MCF 10A (cell line): ENCODE measurements at regions of chr9 and their contacts with region 1.

Region 1: GRCh38 chr9:29613773-29614172 is 2040.5 kb upstream of the C9orf72 start:
- DNase-seq: no peak
- H3K4me3 Mint-ChIP-seq: no peak overlapping the region
- H3K27ac Mint-ChIP-seq: no peak overlapping the region
- H3K4me1 Mint-ChIP-seq: no peaks in the 10 kb centered on the region
- H3K27me3 Mint-ChIP-seq: no peaks in the 10 kb centered on the region
- CTCF ChIP-seq: no peak

Region 2: DNA sequence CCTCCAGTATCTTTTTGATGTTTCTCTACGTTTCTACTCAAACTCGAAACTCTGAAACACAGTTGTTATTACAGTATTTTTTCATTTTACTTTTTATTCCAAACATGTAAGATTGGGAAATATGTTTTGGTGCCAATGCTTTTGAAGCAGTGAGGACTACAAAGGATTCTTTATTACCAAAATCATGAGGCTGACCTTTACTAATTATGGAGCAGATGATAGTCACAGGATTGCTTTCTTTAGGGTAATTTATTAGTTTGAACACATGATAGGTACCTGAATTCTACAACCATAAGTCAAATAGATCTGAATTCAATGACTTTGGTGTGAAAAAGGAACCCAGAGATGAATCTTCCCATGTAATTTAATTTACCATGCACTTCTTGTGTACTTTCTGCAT is 25.4 kb before region 1 on chr9:
- CTCF ChIA-PET with region 1: no interaction called
- POLR2A ChIA-PET with region 1: no interaction called
- intact Hi-C with region 1: no loop called
- DNase-seq: no peak
- H3K4me3 Mint-ChIP-seq: no peak overlapping the region
- H3K27ac Mint-ChIP-seq: no peak overlapping the region
- H3K4me1 Mint-ChIP-seq: no peaks in the 10 kb centered on the region
- H3K27me3 Mint-ChIP-seq: no peaks in the 10 kb centered on the region
- CTCF ChIP-seq: no peak

Region 3: GRCh38 chr9:29730163-29730562 is 116.4 kb after region 1 on chr9:
- CTCF ChIA-PET with region 1: no interaction called
- POLR2A ChIA-PET with region 1: no interaction called
- intact Hi-C with region 1: no loop called
- DNase-seq: no peak
- H3K4me3 Mint-ChIP-seq: no peak overlapping the region
- H3K27ac Mint-ChIP-seq: no peak overlapping the region
- H3K4me1 Mint-ChIP-seq: no peaks in the 10 kb centered on the region
- H3K27me3 Mint-ChIP-seq: no peaks in the 10 kb centered on the region
- CTCF ChIP-seq: no peak

Region 4: GRCh38 chr9:30048396-30048795 is 434.6 kb after region 1 on chr9:
- CTCF ChIA-PET with region 1: no interaction called
- POLR2A ChIA-PET with region 1: no interaction called
- intact Hi-C with region 1: loop called (anchors 5 kb)
- DNase-seq: no peak
- H3K4me3 Mint-ChIP-seq: no peak overlapping the region
- H3K27ac Mint-ChIP-seq: no peak overlapping the region
- H3K4me1 Mint-ChIP-seq: no peaks in the 10 kb centered on the region
- H3K27me3 Mint-ChIP-seq: no peaks in the 10 kb centered on the region
- CTCF ChIP-seq: no peak